PC-3 (cell line): ENCODE measurements at regions of chr17 and their contacts with region 1.

Region 1: GRCh38 chr17:50931144-50931908 is 65.2 kb upstream of the TOB1 start:
- DNase-seq: peak; percentile 75
- ATAC-seq: peak; percentile 83
- H3K4me3 ChIP-seq: peak overlapping the region; percentile 67
- H3K27ac ChIP-seq: peak overlapping the region; percentile 19
- H3K4me1 ChIP-seq: peaks cover 37% of the 10 kb centered on the region
- H3K27me3 ChIP-seq: no peaks in the 10 kb centered on the region
- CTCF ChIP-seq: no peak

Region 2: DNA sequence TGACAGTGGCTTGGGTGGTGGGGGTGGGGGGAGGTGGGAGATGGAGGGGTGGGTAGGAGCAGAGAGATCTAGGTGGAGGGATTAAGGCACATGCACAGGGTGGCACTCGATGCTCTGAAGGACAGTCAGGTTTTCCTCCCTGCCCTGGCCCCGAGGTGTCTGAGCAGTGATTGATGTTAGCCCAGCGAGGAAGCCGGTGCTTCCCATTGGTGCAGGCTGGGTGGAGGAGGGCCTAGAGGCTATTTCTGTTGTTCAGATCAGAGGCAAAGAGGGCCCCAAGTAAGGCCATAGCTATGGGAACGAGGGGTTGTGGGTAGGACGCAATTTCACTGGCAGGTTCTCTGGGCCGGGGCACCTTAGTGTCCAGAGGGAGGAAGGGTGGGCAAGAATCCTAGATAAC is 347.7 kb before region 1 on chr17:
- CTCF ChIA-PET with region 1: no interaction called
- POLR2A ChIA-PET with region 1: no interaction called
- intact Hi-C with region 1: no loop called
- DNase-seq: no peak
- ATAC-seq: no peak
- H3K4me3 ChIP-seq: no peak overlapping the region
- H3K27ac ChIP-seq: no peak overlapping the region
- H3K4me1 ChIP-seq: no peaks in the 10 kb centered on the region
- H3K27me3 ChIP-seq: no peaks in the 10 kb centered on the region; the same call in 1 of the 2 replicates
- CTCF ChIP-seq: no peak

Region 3: DNA sequence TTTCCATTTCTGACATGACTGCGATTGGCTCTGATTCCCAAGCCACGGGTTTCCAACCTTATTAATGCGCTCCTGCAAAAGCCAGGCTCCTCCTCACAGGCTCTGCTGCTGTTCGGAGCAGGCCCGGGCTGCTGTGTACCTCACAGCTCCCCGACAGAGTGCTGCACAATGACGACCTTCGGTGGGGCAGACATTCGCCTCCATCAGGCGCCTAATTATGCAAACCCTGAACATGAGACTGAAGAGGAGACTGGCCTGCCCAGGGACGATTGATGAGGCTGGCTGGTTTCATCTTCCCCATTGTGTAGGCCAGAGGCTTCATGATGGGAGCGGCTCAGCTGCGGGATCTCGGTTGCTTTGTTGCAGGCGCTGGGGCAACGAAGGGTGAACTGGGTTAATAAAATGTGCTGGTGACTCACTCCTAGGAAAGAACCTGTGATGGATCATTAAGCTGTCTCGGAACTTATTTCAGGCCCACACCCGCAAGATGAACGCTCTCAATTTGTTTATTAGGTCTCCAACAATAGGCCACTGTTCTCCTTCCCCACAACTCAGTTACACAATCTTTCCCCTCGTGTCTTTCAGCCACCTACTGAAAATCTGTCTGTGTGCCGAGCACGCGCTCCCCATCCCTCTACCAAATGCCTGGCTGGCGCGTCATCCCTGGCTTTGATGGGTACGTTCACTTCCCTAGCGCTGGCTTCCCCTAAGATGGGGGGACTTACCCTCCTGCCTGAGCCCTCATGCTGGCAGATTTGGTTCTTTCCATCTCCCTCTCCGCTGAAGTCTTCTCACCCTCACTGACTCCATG is 37.9 kb before region 1 on chr17:
- CTCF ChIA-PET with region 1: no interaction called
- POLR2A ChIA-PET with region 1: no interaction called
- intact Hi-C with region 1: loop called (anchors 1 kb)
- DNase-seq: peak; percentile 86
- ATAC-seq: peak; percentile 44
- H3K4me3 ChIP-seq: peak overlapping the region; percentile 1; the same call in 1 of the 2 replicates
- H3K27ac ChIP-seq: peak overlapping the region; percentile 77
- H3K4me1 ChIP-seq: peaks cover 44% of the 10 kb centered on the region
- H3K27me3 ChIP-seq: no peaks in the 10 kb centered on the region
- CTCF ChIP-seq: no peak

Region 4: GRCh38 chr17:51189628-51190027 is 258.3 kb after region 1 on chr17:
- CTCF ChIA-PET with region 1: no interaction called
- POLR2A ChIA-PET with region 1: no interaction called
- intact Hi-C with region 1: no loop called
- DNase-seq: no peak
- ATAC-seq: no peak
- H3K4me3 ChIP-seq: no peak overlapping the region
- H3K27ac ChIP-seq: no peak overlapping the region
- H3K4me1 ChIP-seq: no peaks in the 10 kb centered on the region
- H3K27me3 ChIP-seq: no peaks in the 10 kb centered on the region
- CTCF ChIP-seq: no peak